T-cell (primary cell): ENCODE measurements at regions of chr2 and their contacts with region 1.

Region 1: DNA sequence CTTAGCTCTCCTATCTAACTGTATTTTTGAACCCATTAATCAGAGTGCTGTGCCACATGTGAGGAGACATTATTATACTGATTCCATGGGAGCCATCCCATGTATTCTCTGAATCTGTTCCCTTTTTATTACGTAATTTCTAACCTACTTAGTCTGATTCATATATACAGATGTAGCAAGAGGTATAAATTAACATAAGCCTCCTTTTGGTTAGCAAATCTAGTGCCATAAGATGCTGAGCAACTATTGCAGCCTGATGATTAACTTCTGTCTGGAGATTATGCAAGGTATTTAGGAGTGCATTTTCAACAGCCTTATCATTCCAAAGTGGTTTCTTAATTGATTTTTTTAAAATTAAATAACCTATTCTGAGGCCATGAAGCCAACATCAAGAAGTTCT is 114.1 kb upstream of the MSH2 start:
- DNase-seq: no peak
- ATAC-seq: no peak
- H3K4me3 ChIP-seq: no peak overlapping the region
- H3K4me3 Mint-ChIP-seq: no peak overlapping the region
- H3K27ac ChIP-seq: no peak overlapping the region
- H3K27ac Mint-ChIP-seq: no peak overlapping the region
- H3K4me1 ChIP-seq: no peaks in the 10 kb centered on the region
- H3K4me1 Mint-ChIP-seq: no peaks in the 10 kb centered on the region
- H3K27me3 ChIP-seq: peaks cover 0 to 7% of the 10 kb centered on the region in 2 experiments
- H3K27me3 Mint-ChIP-seq: peaks cover 0 to 1% of the 10 kb centered on the region in 2 donors

Region 2: GRCh38 chr2:47796090-47796697 is 507.3 kb after region 1 on chr2:
- CTCF ChIA-PET with region 1: no interaction called
- POLR2A ChIA-PET with region 1: interaction called, 3 to 14 read pairs
- DNase-seq: no peak
- ATAC-seq: no peak
- H3K4me3 ChIP-seq: no peak overlapping the region
- H3K4me3 Mint-ChIP-seq: no peak overlapping the region
- H3K27ac ChIP-seq: no peak overlapping the region
- H3K27ac Mint-ChIP-seq: peak overlapping the region in 1 of 2 donors; percentile 5
- H3K4me1 ChIP-seq: peaks cover 0 to 2% of the 10 kb centered on the region in 2 experiments
- H3K4me1 Mint-ChIP-seq: peaks cover 1 to 4% (median 2%) of the 10 kb centered on the region in 3 donors
- H3K27me3 ChIP-seq: no peaks in the 10 kb centered on the region
- H3K27me3 Mint-ChIP-seq: no peaks in the 10 kb centered on the region

Region 3: GRCh38 chr2:48600204-48600813 is 1311.4 kb after region 1 on chr2:
- CTCF ChIA-PET with region 1: no interaction called
- POLR2A ChIA-PET with region 1: no interaction called
- DNase-seq: peak in 1 of 35 experiments; percentile 25
- ATAC-seq: no peak
- H3K4me3 ChIP-seq: no peak overlapping the region
- H3K4me3 Mint-ChIP-seq: no peak overlapping the region
- H3K27ac ChIP-seq: no peak overlapping the region
- H3K27ac Mint-ChIP-seq: no peak overlapping the region
- H3K4me1 ChIP-seq: no peaks in the 10 kb centered on the region
- H3K4me1 Mint-ChIP-seq: no peaks in the 10 kb centered on the region
- H3K27me3 ChIP-seq: peaks cover 0 to 2% of the 10 kb centered on the region in 2 experiments
- H3K27me3 Mint-ChIP-seq: peaks cover 0 to 4% of the 10 kb centered on the region in 2 donors